Activated CD8-positive, alpha-beta T cell treated with anti-CD3 and anti-CD28 coated beads for 36 hours (primary cell): ENCODE measurements at regions of chr2 and their contacts with region 1.

Region 1: DNA sequence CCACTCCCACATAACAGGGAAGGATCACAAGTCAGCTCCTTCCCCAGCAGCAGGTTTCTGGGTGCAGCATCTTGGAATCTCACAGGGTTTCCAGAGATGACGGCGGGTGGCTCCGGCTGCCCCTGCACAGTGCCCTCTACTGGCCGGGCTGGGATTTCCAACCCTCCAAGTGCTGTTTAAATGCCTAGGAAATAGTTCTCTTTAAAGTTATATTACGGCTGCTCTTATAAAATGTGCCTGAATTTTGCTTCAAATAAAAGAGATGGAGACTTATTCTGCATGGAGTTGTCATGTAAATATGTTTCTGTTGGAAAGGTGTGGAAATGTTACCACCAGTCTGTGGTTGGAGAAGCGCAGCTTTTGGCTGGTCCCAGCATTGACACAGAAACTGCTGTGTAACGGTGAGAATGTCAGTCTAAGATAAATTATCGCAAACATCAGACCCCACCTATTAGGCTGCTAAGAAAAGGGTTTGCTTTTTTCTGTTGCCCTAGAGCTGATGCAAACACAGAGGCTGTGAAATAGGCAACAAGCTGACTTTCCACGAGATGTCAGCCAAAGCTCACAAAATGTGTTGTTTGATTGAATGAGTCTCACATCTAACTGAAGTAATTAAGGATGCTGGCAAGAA is 3.3 kb upstream of the HJURP start:
- DNase-seq: peak; percentile 76
- ATAC-seq: no peak
- H3K4me3 Mint-ChIP-seq: no peak overlapping the region
- H3K27ac Mint-ChIP-seq: no peak overlapping the region
- H3K4me1 Mint-ChIP-seq: peaks cover 16% of the 10 kb centered on the region
- H3K27me3 Mint-ChIP-seq: peaks cover 2% of the 10 kb centered on the region
- CTCF ChIP-seq: peak; percentile 96

Region 2: DNA sequence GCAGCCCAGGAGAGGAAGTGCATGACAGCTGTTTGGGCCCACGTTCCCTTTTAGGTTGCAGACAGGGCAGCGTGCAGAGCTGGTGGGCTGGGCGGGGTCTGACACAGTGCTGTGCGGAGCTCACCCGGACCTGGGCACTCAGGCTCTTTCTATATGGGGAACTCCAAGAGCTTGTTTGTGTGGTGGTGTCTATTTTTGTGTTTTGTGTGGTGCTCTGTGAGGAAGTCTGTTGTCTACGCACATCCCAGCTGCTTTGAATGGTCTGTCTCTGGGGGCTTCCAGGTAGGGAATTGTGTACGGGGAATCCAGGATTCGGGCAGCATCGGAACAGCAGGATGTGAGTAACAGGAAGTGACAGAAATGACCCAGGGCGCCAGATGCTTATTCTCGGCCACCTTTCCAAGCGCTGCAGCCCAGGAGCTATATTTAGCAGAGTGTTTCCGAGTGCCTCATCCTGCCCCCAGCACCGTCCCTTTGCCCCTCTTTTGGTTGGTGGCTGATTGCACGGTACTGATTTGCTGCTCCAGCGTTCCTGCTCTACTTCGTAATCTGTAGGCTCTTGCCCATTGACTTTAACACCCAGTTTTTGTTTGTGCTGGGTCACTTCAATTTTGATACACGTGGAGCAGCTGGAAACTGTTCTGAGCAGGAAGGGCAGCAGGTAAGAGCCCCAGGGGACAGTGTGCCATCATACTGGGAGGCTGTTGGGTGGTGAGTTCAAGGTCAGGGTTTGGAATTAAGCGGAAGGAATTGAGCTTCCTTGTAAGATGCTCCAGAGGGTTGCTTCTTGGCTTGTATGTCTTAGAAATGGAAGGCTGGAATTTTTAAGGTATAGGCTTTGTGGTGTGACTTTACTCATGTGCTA is 438.6 kb before region 1 on chr2:
- CTCF ChIA-PET with region 1: no interaction called
- POLR2A ChIA-PET with region 1: no interaction called
- intact Hi-C with region 1: no loop called
- DNase-seq: peak; percentile 85
- ATAC-seq: peak; percentile 68
- H3K4me3 Mint-ChIP-seq: peak overlapping the region; percentile 71
- H3K27ac Mint-ChIP-seq: peak overlapping the region; percentile 88
- H3K4me1 Mint-ChIP-seq: peaks cover 93% of the 10 kb centered on the region
- H3K27me3 Mint-ChIP-seq: no peaks in the 10 kb centered on the region
- CTCF ChIP-seq: no peak

Region 3: DNA sequence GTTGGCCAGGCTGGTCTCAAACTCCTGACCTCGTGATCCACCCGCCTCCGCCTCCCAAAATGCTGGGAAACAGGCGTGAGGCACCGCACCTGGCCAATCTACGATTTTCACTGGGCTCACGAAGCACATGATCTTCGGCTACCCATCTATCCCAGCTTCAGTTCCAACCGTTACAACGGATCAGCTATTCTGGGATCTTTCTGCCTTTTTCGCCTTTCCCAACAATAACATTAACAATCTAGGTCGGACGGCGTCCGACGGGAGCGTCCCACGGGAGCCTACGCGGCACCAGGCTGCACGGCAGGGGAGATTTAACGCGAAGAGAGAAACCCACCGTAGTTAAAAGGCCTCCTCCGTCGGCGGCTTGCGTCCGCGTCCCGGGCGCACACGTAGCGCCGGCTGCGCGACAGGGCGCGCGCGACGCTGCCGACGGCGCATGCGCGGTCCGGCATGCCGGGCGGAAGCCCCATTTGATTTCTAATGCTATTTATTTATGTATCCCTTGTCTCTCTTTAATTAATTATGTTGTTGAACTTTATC is 10.4 kb after region 1 on chr2 and contains the start of gene MSL3B:
- CTCF ChIA-PET with region 1: interaction called, 23 read pairs
- POLR2A ChIA-PET with region 1: interaction called, 3 read pairs
- intact Hi-C with region 1: no loop called
- DNase-seq: peak; percentile 58
- ATAC-seq: peak; percentile 93
- H3K4me3 Mint-ChIP-seq: peak within 1 kb of the TSS; percentile 82
- H3K27ac Mint-ChIP-seq: peak within 1 kb of the TSS; percentile 83
- H3K4me1 Mint-ChIP-seq: peaks cover 3% of the 10 kb centered on the region
- H3K27me3 Mint-ChIP-seq: peaks cover 13% of the 10 kb centered on the region
- CTCF ChIP-seq: no peak